Activated CD4-positive, alpha-beta T cell treated with anti-CD3 and anti-CD28 coated beads for 36 hours (primary cell): ENCODE measurements at regions of chr1 and their contacts with region 1.

Region 1: GRCh38 chr1:43529206-43529731 is 1.4 kb upstream of the PTPRF start:
- DNase-seq: peak; percentile 90
- ATAC-seq: peak; percentile 75
- H3K4me3 Mint-ChIP-seq: no peak overlapping the region
- H3K27ac Mint-ChIP-seq: no peak overlapping the region
- H3K4me1 Mint-ChIP-seq: peaks cover 20% of the 10 kb centered on the region
- H3K27me3 Mint-ChIP-seq: peaks cover 37% of the 10 kb centered on the region

Region 2: GRCh38 chr1:42037161-42037560 is 1492.1 kb before region 1 on chr1:
- CTCF ChIA-PET with region 1: no interaction called
- POLR2A ChIA-PET with region 1: no interaction called
- intact Hi-C with region 1: no loop called
- DNase-seq: no peak
- ATAC-seq: no peak
- H3K4me3 Mint-ChIP-seq: no peak overlapping the region
- H3K27ac Mint-ChIP-seq: no peak overlapping the region
- H3K4me1 Mint-ChIP-seq: peaks cover 25% of the 10 kb centered on the region
- H3K27me3 Mint-ChIP-seq: no peaks in the 10 kb centered on the region

Region 3: DNA sequence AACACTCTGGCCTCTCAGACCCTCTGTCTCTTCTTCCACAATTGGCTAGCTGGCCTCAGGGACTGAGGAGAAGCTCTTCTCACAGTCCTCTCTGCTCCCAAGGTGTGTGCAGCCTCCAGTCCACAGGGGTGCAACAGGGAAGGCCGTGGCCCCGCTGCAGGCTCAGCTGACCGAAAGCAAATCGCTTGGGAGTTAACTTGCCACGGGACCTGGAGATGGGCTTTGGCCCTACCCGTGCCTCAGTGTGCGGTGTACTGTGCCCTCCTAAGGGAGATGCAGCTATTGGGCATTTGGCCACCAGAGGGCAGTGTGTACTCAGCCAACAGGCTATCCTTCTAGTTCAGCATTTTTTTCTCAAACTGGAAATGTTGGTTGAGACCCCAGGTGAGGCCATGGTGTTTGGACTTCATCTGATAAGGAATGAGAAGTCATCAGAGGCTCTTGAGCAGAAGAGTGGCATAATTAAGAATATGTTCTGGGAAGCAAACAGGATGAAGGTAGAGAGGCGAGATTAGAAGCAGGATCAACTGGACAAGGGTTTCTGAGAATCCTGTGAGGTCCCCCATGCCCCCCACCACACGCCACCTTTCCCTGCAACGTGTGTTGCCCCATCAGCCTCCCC is 302.0 kb before region 1 on chr1:
- CTCF ChIA-PET with region 1: no interaction called
- POLR2A ChIA-PET with region 1: no interaction called
- intact Hi-C with region 1: loop called in 1 of 2 experiments (anchors 5 kb)
- DNase-seq: peak; percentile 92
- ATAC-seq: peak; percentile 93
- H3K4me3 Mint-ChIP-seq: no peak overlapping the region
- H3K27ac Mint-ChIP-seq: no peak overlapping the region
- H3K4me1 Mint-ChIP-seq: no peaks in the 10 kb centered on the region
- H3K27me3 Mint-ChIP-seq: peaks cover 2% of the 10 kb centered on the region

Region 4: DNA sequence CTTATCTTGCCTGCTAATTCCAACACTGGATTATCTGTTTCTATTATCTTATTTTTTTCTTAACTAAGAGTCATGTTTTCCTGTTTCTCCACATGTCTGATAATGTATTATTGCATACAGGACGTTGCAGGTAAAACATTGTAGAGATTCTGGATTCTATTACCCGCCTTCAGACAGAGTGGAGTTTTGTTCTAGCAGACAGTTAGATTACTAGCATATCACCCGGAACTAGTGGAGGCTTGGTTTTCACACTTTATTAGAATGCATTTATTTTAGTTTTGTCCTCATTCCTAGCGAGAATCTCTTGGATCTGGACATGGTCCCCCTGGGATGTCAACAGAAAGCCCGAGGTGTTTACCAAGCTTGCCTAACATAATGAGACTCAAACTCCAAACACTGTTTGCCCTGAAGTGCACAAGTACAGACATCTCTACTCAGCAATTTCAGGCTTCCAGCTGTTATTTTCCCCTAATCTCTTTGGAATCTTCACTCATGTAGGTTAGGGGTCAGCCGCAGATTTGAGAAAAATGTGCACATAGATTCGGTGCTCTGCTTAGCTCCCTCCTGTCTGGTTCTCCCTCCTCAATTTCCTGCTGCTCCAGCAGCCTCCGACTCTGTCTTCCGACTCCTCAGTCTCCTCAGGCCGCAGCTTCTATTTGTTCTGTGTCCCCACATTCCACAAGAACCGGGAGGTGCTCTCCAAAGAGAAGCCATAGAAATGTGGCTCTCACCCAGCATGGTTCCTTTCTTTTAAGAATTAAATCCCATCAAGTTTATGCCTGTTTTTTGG is 35.4 kb before region 1 on chr1:
- CTCF ChIA-PET with region 1: no interaction called
- POLR2A ChIA-PET with region 1: no interaction called
- intact Hi-C with region 1: no loop called
- DNase-seq: no peak
- ATAC-seq: no peak
- H3K4me3 Mint-ChIP-seq: no peak overlapping the region
- H3K27ac Mint-ChIP-seq: no peak overlapping the region
- H3K4me1 Mint-ChIP-seq: no peaks in the 10 kb centered on the region
- H3K27me3 Mint-ChIP-seq: peaks cover 11% of the 10 kb centered on the region

Region 5: GRCh38 chr1:43565600-43566360 is 36.5 kb after region 1 on chr1:
- CTCF ChIA-PET with region 1: no interaction called
- POLR2A ChIA-PET with region 1: no interaction called
- intact Hi-C with region 1: loop called in 1 of 2 experiments (anchors 1 kb)
- DNase-seq: peak; percentile 81
- ATAC-seq: peak; percentile 87
- H3K4me3 Mint-ChIP-seq: peak overlapping the region; percentile 62
- H3K27ac Mint-ChIP-seq: no peak overlapping the region
- H3K4me1 Mint-ChIP-seq: no peaks in the 10 kb centered on the region
- H3K27me3 Mint-ChIP-seq: peaks cover 11% of the 10 kb centered on the region

Region 6: GRCh38 chr1:43611950-43612349 is 82.7 kb after region 1 on chr1:
- CTCF ChIA-PET with region 1: no interaction called
- POLR2A ChIA-PET with region 1: no interaction called
- intact Hi-C with region 1: no loop called
- DNase-seq: no peak
- ATAC-seq: no peak
- H3K4me3 Mint-ChIP-seq: no peak overlapping the region
- H3K27ac Mint-ChIP-seq: no peak overlapping the region
- H3K4me1 Mint-ChIP-seq: no peaks in the 10 kb centered on the region
- H3K27me3 Mint-ChIP-seq: no peaks in the 10 kb centered on the region

Region 7: GRCh38 chr1:43763497-43763973 is 234.3 kb after region 1 on chr1:
- CTCF ChIA-PET with region 1: interaction called, 5 read pairs
- POLR2A ChIA-PET with region 1: no interaction called
- intact Hi-C with region 1: loop called (anchors 1 kb)
- DNase-seq: peak; percentile 59
- ATAC-seq: peak; percentile 90
- H3K4me3 Mint-ChIP-seq: no peak overlapping the region
- H3K27ac Mint-ChIP-seq: no peak overlapping the region
- H3K4me1 Mint-ChIP-seq: no peaks in the 10 kb centered on the region
- H3K27me3 Mint-ChIP-seq: no peaks in the 10 kb centered on the region

Region 8: DNA sequence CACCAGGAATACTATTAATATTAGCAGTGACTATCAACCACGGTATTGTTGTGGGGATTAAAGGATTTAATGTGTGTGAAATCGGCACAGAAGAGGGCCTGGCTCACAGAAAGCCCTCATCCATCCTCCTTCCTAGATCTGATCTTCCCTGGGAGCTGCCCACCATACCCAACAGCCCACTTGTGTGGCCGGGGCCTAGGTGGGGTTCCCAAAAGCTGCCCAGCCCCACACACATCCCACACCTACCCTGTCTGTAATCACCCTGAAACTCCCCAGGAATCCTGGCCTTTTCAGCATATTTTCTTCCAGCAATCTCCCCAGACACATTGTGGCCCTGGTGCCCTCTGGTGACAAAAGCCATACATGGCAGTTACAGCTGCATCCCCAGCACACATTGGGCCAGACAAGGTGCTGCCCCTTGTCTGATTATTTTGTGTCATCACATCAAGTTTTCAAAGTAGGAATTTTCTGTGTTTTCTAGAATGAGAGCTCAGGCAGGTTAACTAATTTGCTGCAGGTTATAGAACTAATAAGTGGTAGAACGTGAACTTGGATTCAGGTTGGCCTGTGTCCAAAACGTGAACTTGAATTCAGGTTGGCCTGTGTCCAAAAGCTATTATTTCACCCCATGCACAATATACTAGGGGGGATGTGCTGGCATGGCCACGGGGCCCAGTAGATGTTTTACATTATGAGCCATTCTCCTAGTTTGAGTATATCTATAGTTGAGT is 507.3 kb after region 1 on chr1:
- CTCF ChIA-PET with region 1: no interaction called
- POLR2A ChIA-PET with region 1: no interaction called
- intact Hi-C with region 1: loop called in 1 of 2 experiments (anchors 2 kb)
- DNase-seq: peak; percentile 85
- ATAC-seq: peak; percentile 89
- H3K4me3 Mint-ChIP-seq: no peak overlapping the region
- H3K27ac Mint-ChIP-seq: no peak overlapping the region
- H3K4me1 Mint-ChIP-seq: peaks cover 5% of the 10 kb centered on the region
- H3K27me3 Mint-ChIP-seq: no peaks in the 10 kb centered on the region